ENCODE measurements at regions of chr16 and their contacts with region 1.

Region 1: DNA sequence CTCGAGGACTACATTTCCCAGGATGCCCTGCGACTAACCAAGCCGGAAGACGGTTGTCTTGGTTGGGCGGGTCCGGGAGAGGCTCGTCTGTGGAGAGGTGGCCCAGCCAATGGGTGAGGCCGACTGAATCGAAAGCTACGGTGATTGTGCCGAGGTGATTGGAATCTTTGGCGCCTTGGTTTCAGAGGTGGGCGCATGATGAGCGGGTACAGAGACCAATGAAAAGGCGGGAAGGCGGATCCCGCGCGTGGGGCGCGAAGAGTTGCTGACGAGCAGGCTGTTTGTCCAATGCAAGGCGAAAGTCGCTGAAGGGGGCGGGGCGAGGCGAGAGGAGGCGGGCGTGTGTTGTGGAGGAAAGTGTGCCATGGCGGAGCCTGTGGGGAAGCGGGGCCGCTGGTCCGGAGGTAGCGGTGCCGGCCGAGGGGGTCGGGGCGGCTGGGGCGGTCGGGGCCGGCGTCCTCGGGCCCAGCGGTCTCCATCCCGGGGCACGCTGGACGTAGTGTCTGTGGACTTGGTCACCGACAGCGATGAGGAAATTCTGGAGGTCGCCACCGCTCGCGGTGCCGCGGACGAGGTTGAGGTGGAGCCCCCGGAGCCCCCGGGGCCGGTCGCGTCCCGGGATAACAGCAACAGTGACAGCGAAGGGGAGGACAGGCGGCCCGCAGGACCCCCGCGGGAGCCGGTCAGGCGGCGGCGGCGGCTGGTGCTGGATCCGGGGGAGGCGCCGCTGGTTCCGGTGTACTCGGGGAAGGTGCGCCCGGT is at the start of gene NFATC2IP:
- DNase-seq: peak; percentile 98
- ATAC-seq: peak; percentile 95
- H3K4me3 Mint-ChIP-seq: peak within 1 kb of the TSS; percentile 91
- H3K27ac Mint-ChIP-seq: peak within 1 kb of the TSS; percentile 81
- H3K4me1 Mint-ChIP-seq: peaks cover 25% of the 10 kb centered on the region
- H3K27me3 Mint-ChIP-seq: no peaks in the 10 kb centered on the region
- CTCF ChIP-seq: no peak
- total RNA-seq, gene NFATC2IP: 62.9 and 85.7 TPM in 2 replicates

Region 2: DNA sequence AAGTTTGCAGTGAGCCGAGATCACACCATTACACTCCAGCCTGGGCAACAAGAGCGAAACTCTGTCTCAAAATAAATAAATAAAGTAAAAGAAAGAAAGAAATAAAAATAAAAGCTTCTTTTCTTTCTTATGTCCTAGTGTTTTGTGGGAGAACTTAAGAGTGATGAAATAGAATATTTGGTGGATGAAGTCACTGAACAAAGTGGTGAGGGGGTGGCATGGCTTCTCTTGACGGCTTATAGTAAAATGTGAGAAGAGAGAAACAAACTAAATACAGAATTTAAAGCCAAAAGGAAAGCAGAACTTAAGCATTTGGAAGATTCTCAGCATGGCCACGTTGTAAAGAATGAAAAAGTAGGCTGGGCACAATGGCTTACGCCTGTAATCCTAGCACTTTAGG is 381.8 kb before region 1 on chr16:
- CTCF ChIA-PET with region 1: no interaction called
- POLR2A ChIA-PET with region 1: no interaction called
- intact Hi-C with region 1: no loop called
- DNase-seq: no peak
- ATAC-seq: no peak
- H3K4me3 Mint-ChIP-seq: no peak overlapping the region
- H3K27ac Mint-ChIP-seq: no peak overlapping the region
- H3K4me1 Mint-ChIP-seq: peaks cover 7% of the 10 kb centered on the region
- H3K27me3 Mint-ChIP-seq: no peaks in the 10 kb centered on the region
- CTCF ChIP-seq: no peak

Region 3: GRCh38 chr16:28846080-28846932 is 104.5 kb before region 1 on chr16 and contains the start of gene TUFM:
- CTCF ChIA-PET with region 1: interaction called, 20 read pairs
- POLR2A ChIA-PET with region 1: interaction called, 5 read pairs
- intact Hi-C with region 1: loop called (anchors 1 kb)
- DNase-seq: peak; percentile 96
- ATAC-seq: peak; percentile 97
- H3K4me3 Mint-ChIP-seq: peak within 1 kb of the TSS; percentile 95
- H3K27ac Mint-ChIP-seq: peak within 1 kb of the TSS; percentile 90
- H3K4me1 Mint-ChIP-seq: peaks cover 28% of the 10 kb centered on the region
- H3K27me3 Mint-ChIP-seq: no peaks in the 10 kb centered on the region
- CTCF ChIP-seq: no peak
- total RNA-seq, gene TUFM: 189 and 206 TPM in 2 replicates

Region 4: DNA sequence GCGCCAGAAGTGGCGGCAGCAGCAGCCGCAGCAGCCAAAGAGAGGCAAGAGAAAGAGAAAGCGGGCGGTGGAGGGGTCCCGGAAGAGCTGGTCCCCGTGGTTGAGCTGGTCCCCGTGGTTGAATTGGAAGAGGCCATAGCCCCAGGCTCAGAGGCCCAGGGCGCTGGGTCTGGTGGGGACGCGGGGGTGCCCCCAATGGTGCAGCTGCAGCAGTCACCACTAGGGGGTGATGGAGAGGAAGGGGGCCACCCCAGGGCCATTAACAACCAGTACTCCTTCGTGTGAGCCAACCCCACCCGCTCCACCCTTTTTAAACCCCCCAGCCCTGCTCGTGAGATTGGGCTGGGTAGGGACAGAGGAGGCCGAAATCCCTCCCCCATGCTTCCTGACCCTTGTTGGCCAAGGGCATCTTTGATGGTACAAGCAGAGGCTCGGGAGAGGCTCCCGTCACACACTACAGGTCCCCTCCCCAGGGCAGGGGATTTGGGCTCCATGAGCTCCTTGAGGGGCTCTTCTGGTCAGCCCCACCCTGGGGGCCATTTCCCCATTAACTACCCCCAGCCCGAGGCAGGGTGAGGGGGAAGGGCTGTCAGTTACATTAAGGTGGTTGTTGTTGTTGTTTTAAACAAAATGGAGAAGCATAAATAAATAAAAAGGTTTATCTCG is 77.2 kb before region 1 on chr16:
- CTCF ChIA-PET with region 1: interaction called, 60 read pairs
- POLR2A ChIA-PET with region 1: interaction called, 4 read pairs
- intact Hi-C with region 1: no loop called
- DNase-seq: peak; percentile 53
- ATAC-seq: peak; percentile 92
- H3K4me3 Mint-ChIP-seq: no peak overlapping the region
- H3K27ac Mint-ChIP-seq: no peak overlapping the region
- H3K4me1 Mint-ChIP-seq: peaks cover 2% of the 10 kb centered on the region
- H3K27me3 Mint-ChIP-seq: no peaks in the 10 kb centered on the region
- CTCF ChIP-seq: no peak

Region 5: DNA sequence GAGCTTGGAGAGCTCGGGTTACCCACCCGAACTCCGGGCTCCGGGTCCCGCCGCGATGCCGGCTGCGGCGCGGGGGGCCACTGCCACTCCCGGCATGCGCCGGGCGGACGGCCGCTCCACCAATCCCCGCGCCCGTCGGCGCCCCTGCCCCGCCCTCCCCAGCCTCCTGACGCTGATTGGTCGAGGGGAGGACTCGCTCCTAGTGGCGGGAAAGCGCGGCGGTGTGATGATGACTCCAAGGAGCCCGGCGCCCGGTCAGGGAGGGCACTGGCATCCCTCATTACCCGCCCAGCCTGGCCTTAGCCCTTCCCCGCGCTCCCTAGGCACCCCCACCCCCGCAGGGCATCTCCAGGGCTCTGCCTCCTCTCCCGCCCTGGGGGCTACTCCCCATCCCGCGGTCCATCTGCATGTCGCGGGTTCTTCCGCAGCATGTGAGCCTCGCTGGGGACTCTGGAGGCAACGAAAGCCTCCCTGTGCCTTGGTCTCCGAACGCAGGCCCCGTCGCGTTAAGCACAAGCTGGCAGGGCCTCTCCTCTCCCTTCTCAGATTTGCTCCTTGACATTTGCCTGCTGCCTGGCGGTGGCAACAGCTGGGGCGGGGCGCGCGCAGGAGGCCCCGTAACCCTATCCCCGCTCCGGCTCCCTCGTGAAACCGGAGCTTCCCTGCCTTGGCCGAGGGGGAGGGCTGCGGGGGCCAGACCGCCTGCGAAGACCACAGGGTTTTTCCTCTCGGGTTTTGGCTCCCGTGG is 70.8 kb before region 1 on chr16:
- CTCF ChIA-PET with region 1: interaction called, 60 read pairs
- POLR2A ChIA-PET with region 1: no interaction called
- intact Hi-C with region 1: no loop called
- DNase-seq: peak; percentile 71
- ATAC-seq: peak; percentile 98
- H3K4me3 Mint-ChIP-seq: peak overlapping the region; percentile 89
- H3K27ac Mint-ChIP-seq: peak overlapping the region; percentile 59
- H3K4me1 Mint-ChIP-seq: peaks cover 14% of the 10 kb centered on the region
- H3K27me3 Mint-ChIP-seq: peaks cover 5% of the 10 kb centered on the region
- CTCF ChIP-seq: no peak

Region 6: GRCh38 chr16:28910086-28911031 is 40.5 kb before region 1 on chr16:
- CTCF ChIA-PET with region 1: interaction called, 16 read pairs
- POLR2A ChIA-PET with region 1: no interaction called
- intact Hi-C with region 1: loop called (anchors 5 kb)
- DNase-seq: no peak
- ATAC-seq: peak; percentile 73
- H3K4me3 Mint-ChIP-seq: peak overlapping the region; percentile 7
- H3K27ac Mint-ChIP-seq: peak overlapping the region; percentile 87
- H3K4me1 Mint-ChIP-seq: peaks cover 12% of the 10 kb centered on the region
- H3K27me3 Mint-ChIP-seq: no peaks in the 10 kb centered on the region
- CTCF ChIP-seq: no peak

Region 7: DNA sequence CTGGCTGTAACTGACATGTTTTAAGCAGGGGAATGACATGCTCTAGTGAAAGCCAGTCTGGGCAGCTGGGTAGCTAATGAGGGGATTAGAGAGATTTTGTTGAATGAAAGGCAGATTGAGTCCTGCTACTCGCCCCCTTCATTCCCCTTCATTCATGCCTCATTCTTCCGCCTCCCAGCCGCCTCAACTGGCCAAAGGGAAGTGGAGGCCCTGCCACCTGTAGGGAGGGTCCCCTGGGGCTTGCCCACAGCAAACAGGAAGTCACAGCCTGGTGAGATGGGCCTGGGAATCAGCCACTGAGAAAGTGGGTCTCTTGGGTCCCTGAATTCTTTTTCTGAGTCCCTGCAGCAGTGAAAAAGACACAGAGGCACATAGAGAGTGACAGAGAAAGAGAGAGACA is 20.2 kb before region 1 on chr16:
- CTCF ChIA-PET with region 1: interaction called, 51 read pairs
- POLR2A ChIA-PET with region 1: interaction called, 31 read pairs
- intact Hi-C with region 1: no loop called
- DNase-seq: peak; percentile 60
- ATAC-seq: peak; percentile 76
- H3K4me3 Mint-ChIP-seq: peak overlapping the region; percentile 99
- H3K27ac Mint-ChIP-seq: peak overlapping the region; percentile 98
- H3K4me1 Mint-ChIP-seq: peaks cover 75% of the 10 kb centered on the region
- H3K27me3 Mint-ChIP-seq: no peaks in the 10 kb centered on the region
- CTCF ChIP-seq: no peak

Region 8: DNA sequence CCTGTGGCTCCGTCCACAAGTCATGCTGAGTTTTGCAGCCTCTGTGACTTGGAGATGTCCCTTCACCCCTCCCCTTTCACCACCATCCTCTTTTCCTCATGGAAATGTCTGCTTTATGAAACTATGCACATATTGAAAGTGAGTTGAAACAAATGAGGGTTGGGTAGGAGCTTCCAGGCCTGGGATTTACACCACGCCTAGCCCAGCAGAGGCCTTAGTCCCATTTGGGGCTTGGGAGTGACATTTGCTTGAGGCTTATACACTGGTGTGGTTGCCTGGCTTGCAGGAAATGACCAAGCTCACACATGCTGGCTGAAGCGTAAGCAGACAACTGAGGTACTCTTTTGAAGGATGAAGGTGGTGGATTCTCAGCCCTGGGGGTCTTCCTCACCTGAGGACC is 13.2 kb after region 1 on chr16:
- CTCF ChIA-PET with region 1: no interaction called
- POLR2A ChIA-PET with region 1: no interaction called
- intact Hi-C with region 1: no loop called
- DNase-seq: no peak
- ATAC-seq: no peak
- H3K4me3 Mint-ChIP-seq: no peak overlapping the region
- H3K27ac Mint-ChIP-seq: no peak overlapping the region
- H3K4me1 Mint-ChIP-seq: no peaks in the 10 kb centered on the region
- H3K27me3 Mint-ChIP-seq: no peaks in the 10 kb centered on the region
- CTCF ChIP-seq: no peak

Region 9: GRCh38 chr16:28974437-28975157 is 23.8 kb after region 1 on chr16 and contains the start of gene SPNS1:
- CTCF ChIA-PET with region 1: interaction called, 3 read pairs
- POLR2A ChIA-PET with region 1: interaction called, 7 read pairs
- intact Hi-C with region 1: loop called (anchors 1 kb)
- DNase-seq: peak; percentile 91
- ATAC-seq: peak; percentile 91
- H3K4me3 Mint-ChIP-seq: peak within 1 kb of the TSS; percentile 94
- H3K27ac Mint-ChIP-seq: peak within 1 kb of the TSS; percentile 94
- H3K4me1 Mint-ChIP-seq: peaks cover 31% of the 10 kb centered on the region
- H3K27me3 Mint-ChIP-seq: no peaks in the 10 kb centered on the region
- CTCF ChIP-seq: no peak
- total RNA-seq, gene SPNS1: 26.6 and 29.2 TPM in 2 replicates

Measured in activated B cell treated with CpG ODN at 0.5 μM for 24 hours (primary cell).